ENCODE measurements at regions of chr18 and their contacts with region 1.

Region 1: DNA sequence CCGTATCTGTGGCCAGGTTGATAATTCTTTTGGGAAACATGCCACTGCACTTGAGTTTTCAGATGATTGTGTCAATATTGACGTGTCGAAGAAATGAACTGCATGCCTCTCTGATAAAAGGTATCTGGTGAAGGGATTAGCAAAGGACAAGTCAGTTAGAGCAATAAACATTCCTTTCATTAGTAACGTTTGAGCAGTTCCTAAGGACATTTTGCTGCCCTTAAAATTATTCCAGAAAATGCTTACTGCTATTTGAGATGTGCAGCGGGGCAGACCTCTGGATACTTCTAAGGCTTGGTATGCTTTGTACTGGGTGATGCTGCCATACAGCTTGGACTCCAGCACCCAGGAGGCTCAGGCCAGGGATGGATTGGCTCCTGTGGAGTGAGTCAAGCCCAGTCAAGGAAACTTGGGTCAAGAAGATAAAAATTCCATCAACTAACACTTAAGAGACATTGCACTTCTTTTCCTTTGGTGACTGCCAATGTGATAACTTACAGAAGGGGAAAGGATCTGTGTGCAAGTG is 166.7 kb downstream of the FHOD3 start:
- DNase-seq: no peak
- H3K4me3 ChIP-seq: no peak overlapping the region
- H3K27ac ChIP-seq: no peak overlapping the region
- H3K4me1 ChIP-seq: no peaks in the 10 kb centered on the region
- H3K27me3 ChIP-seq: peaks cover 6% of the 10 kb centered on the region
- CTCF ChIP-seq: no peak

Region 2: GRCh38 chr18:36481201-36481657 is 17.0 kb after region 1 on chr18:
- CTCF ChIA-PET with region 1: no interaction called
- POLR2A ChIA-PET with region 1: no interaction called
- intact Hi-C with region 1: loop called (anchors 1 kb)
- DNase-seq: no peak
- H3K4me3 ChIP-seq: no peak overlapping the region
- H3K27ac ChIP-seq: no peak overlapping the region
- H3K4me1 ChIP-seq: no peaks in the 10 kb centered on the region
- H3K27me3 ChIP-seq: peaks cover 3% of the 10 kb centered on the region
- CTCF ChIP-seq: no peak

Region 3: DNA sequence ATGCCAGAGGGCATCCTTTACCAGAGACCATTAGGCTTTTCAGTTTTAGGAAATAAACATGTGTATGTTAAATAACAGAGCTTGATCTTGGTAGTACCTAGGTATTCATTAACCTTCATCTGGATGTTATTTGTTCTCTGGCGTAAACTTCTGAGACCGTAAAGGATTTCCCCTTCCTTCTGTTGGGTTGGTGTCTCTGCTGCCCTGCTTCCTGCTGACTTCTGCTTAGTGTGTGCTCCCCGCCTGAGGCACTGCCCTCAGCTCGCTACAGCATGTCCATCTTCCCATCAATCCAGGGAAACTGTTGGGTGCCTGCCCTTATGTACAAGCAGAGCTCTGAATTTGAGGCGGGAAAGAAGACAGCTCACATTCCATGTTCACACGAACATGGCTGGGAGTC is 186.7 kb after region 1 on chr18:
- CTCF ChIA-PET with region 1: no interaction called
- POLR2A ChIA-PET with region 1: no interaction called
- intact Hi-C with region 1: no loop called
- DNase-seq: no peak
- H3K4me3 ChIP-seq: no peak overlapping the region
- H3K27ac ChIP-seq: no peak overlapping the region
- H3K4me1 ChIP-seq: no peaks in the 10 kb centered on the region
- H3K27me3 ChIP-seq: peaks cover 52% of the 10 kb centered on the region
- CTCF ChIP-seq: no peak

Measured in A673 (cell line).